SK-N-SH (cell line): ENCODE measurements at regions of chr2 and their contacts with region 1.

Region 1: DNA sequence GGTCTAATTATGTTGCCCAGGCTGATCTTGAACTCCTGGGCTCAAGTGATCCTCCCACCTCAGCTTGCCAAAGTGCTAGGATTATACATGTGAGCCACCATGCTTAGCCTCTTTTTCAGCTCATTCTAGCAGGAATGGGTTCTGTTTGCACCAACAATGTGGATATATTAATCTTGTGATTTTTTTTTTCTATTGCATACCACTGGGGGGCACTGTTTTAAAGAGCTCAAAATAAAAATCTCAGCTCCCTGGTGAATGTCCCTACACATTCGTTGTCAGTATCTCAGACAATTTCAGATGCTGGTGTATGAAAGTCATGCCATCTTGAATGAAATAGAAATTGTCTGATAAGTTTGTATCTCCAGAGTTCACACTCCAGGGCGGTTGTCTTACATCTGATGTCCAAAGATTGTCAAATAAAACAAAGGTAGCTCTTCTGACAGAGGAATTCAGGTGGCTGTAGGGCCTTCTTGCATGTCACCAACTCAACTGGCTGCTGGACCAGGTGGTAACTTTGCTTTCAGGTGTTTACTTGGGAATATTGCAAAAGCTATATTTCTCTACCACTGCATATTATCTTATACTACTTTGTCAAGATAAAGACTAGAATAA is 3.1 kb upstream of the MATN3 start:
- DNase-seq: peak; percentile 80
- H3K4me3 ChIP-seq: no peak overlapping the region
- H3K27ac ChIP-seq: no peak overlapping the region
- H3K4me1 ChIP-seq: peaks cover 0 to 16% of the 10 kb centered on the region in 2 experiments; a peak in 2 of 4 replicates
- H3K27me3 ChIP-seq: no peaks in the 10 kb centered on the region
- CTCF ChIP-seq: peak; percentile 84
- EP300 ChIP-seq: no peak
- RAD21 ChIP-seq: peak; percentile 93

Region 2: GRCh38 chr2:19120941-19121750 is 894.4 kb before region 1 on chr2:
- CTCF ChIA-PET with region 1: no interaction called
- POLR2A ChIA-PET with region 1: no interaction called
- DNase-seq: no peak
- H3K4me3 ChIP-seq: 0 out of 4 replicates have a peak overlapping the region, but pooled peaks of 1 of the 2 experiments have one; percentile 4
- H3K27ac ChIP-seq: peak overlapping the region; percentile 18 to 71; a peak in 3 of 4 replicates
- H3K4me1 ChIP-seq: peaks cover 0 to 39% of the 10 kb centered on the region in 2 experiments; a peak in 3 of 4 replicates
- H3K27me3 ChIP-seq: no peaks in the 10 kb centered on the region
- CTCF ChIP-seq: no peak
- EP300 ChIP-seq: peak in 1 of 2 experiments; percentile 92; a peak in 2 of 4 replicates
- RAD21 ChIP-seq: no peak

Region 3: DNA sequence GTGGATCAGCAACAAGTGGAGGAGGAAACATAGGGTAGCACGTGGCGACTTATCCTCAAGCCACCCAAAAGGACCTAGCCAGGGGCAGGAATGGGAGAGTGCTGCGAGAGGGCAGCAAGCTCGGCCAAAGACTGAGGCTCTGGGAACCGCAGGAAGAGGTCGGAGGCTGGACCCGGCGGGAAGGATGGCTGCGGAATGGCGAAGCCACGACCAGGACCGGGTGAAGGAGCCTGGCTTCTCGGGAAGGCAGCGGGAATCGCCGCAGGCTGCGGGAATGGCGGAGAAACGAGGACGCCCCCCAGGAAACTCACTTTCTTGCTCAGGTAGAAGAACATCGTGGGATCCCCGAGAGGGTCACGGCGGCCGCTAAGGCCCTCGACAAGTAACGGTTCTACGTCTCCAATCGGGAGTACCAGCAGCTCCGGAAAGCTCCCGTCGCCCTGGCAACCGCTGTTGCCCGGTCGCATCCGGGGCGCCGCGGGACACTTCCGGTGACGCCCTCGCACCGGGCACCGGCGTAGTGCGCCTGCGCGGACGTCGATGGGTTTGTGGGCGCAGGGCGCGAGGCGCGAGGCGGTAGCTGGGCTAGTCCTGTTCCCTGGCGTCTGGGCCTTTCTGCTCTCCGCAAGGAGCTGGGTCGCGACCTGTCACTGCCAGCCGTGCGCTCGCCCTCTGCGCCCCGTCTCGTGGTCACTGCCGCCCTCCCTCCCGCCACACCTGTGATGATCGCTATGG is 25.7 kb before region 1 on chr2 and contains the start of gene WDR35:
- CTCF ChIA-PET with region 1: interaction called, 23 read pairs
- POLR2A ChIA-PET with region 1: interaction called, 4 read pairs
- DNase-seq: peak; percentile 100
- H3K4me3 ChIP-seq: peak within 1 kb of the TSS; percentile 84 to 100
- H3K27ac ChIP-seq: peak within 1 kb of the TSS; percentile 79 to 95
- H3K4me1 ChIP-seq: peaks cover 14 to 27% of the 10 kb centered on the region in 2 experiments; a peak in 3 of 4 replicates
- H3K27me3 ChIP-seq: no peaks in the 10 kb centered on the region
- CTCF ChIP-seq: no peak
- EP300 ChIP-seq: no peak
- RAD21 ChIP-seq: no peak
- polyA plus RNA-seq, gene WDR35: 8.6 and 12.1 TPM in 2 replicates

Region 4: GRCh38 chr2:20035955-20036666 is 20.5 kb after region 1 on chr2:
- CTCF ChIA-PET with region 1: interaction called, 82 read pairs
- POLR2A ChIA-PET with region 1: no interaction called
- DNase-seq: no peak
- H3K4me3 ChIP-seq: no peak overlapping the region
- H3K27ac ChIP-seq: no peak overlapping the region
- H3K4me1 ChIP-seq: peaks cover 0 to 3% of the 10 kb centered on the region in 2 experiments; a peak in 1 of 4 replicates
- H3K27me3 ChIP-seq: no peaks in the 10 kb centered on the region
- CTCF ChIP-seq: no peak
- EP300 ChIP-seq: no peak
- RAD21 ChIP-seq: no peak

Region 5: GRCh38 chr2:20071397-20072383 is 56.1 kb after region 1 on chr2:
- CTCF ChIA-PET with region 1: interaction called, 23 read pairs
- POLR2A ChIA-PET with region 1: no interaction called
- DNase-seq: peak; percentile 80
- H3K4me3 ChIP-seq: peak overlapping the region; percentile 11 to 23; a peak in 2 of 4 replicates
- H3K27ac ChIP-seq: peak overlapping the region; percentile 98 to 99
- H3K4me1 ChIP-seq: peaks cover 21 to 52% of the 10 kb centered on the region in 2 experiments
- H3K27me3 ChIP-seq: no peaks in the 10 kb centered on the region
- CTCF ChIP-seq: no peak
- EP300 ChIP-seq: peak; percentile 60 to 73; a peak in 3 of 4 replicates
- RAD21 ChIP-seq: peak; percentile 45

Region 6: DNA sequence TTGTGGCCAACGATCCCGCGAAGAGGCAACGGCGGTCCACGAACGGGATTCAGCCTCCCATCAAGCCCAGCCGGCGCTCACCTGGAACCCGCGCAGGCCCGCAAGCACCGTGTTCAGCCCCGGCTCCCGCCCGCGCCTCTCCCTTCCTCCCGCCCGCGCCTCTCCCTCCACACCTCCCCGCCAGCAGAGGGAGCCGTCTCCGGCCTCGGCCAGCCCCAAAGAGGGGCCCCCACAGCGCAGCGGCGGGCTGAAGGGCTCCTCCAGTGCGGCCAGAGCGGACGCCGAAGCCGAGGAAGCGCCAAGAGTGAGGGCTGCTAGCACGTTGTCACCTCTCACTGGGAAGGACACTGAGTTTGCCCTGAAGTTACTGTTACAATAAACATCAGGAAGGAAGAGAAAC is 91.2 kb after region 1 on chr2:
- CTCF ChIA-PET with region 1: interaction called, 14 read pairs
- POLR2A ChIA-PET with region 1: no interaction called
- DNase-seq: no peak
- H3K4me3 ChIP-seq: no peak overlapping the region
- H3K27ac ChIP-seq: no peak overlapping the region
- H3K4me1 ChIP-seq: no peaks in the 10 kb centered on the region; a peak in 1 of 4 replicates
- H3K27me3 ChIP-seq: no peaks in the 10 kb centered on the region
- CTCF ChIP-seq: peak; percentile 20; the same call in 1 of the 2 replicates
- EP300 ChIP-seq: no peak
- RAD21 ChIP-seq: no peak

Region 7: GRCh38 chr2:20291106-20291564 is 275.6 kb after region 1 on chr2:
- CTCF ChIA-PET with region 1: interaction called, 16 read pairs
- POLR2A ChIA-PET with region 1: no interaction called
- DNase-seq: peak; percentile 79
- H3K4me3 ChIP-seq: no peak overlapping the region
- H3K27ac ChIP-seq: peak overlapping the region; percentile 37 to 64
- H3K4me1 ChIP-seq: peaks cover 0 to 7% of the 10 kb centered on the region in 2 experiments; a peak in 2 of 4 replicates
- H3K27me3 ChIP-seq: no peaks in the 10 kb centered on the region
- CTCF ChIP-seq: peak; percentile 89
- EP300 ChIP-seq: no peak
- RAD21 ChIP-seq: peak; percentile 74